GM12878 (cell line): ENCODE measurements at regions of chr13 and their contacts with region 1.

Region 1: GRCh38 chr13:50911937-50912795 is 2.6 kb downstream of the RNASEH2B start:
- DNase-seq: peak; percentile 88
- ATAC-seq: peak; percentile 63
- H3K4me3 ChIP-seq: peak overlapping the region; percentile 95
- H3K27ac ChIP-seq: peak overlapping the region; percentile 99
- H3K4me1 ChIP-seq: peaks cover 25% of the 10 kb centered on the region
- H3K27me3 ChIP-seq: no peaks in the 10 kb centered on the region
- CTCF ChIP-seq: peak; percentile 89 to 98 (median 91); a peak in 5 of 6 replicates
- EP300 ChIP-seq: peak; percentile 38 to 94; a peak in 3 of 4 replicates
- POLR2A ChIP-seq: peak; percentile 37; the same call in 1 of the 2 replicates
- RAD21 ChIP-seq: peak; percentile 98

Region 2: GRCh38 chr13:49936085-49936940 is 975.9 kb before region 1 on chr13 and contains the start of gene SPRYD7:
- CTCF ChIA-PET with region 1: interaction called, 9 read pairs
- POLR2A ChIA-PET with region 1: interaction called, 4 read pairs
- RAD21 ChIA-PET with region 1: interaction called, 8 read pairs
- SMC1A ChIA-PET with region 1: no interaction called
- in situ Hi-C with region 1: no loop called
- intact Hi-C with region 1: loop called (anchors 5 kb)
- DNase-seq: peak; percentile 90
- ATAC-seq: peak; percentile 97
- H3K4me3 ChIP-seq: peak within 1 kb of the TSS; percentile 82
- H3K27ac ChIP-seq: peak within 1 kb of the TSS; percentile 58
- H3K4me1 ChIP-seq: 0 out of 2 replicates have a peak, but pooled peaks cover 2% of the 10 kb centered on the region
- H3K27me3 ChIP-seq: no peaks in the 10 kb centered on the region
- CTCF ChIP-seq: peak; percentile 96 to 97 (median 96)
- EP300 ChIP-seq: 0 out of 4 replicates have a peak, but pooled peaks of 1 of the 2 experiments have one; percentile 2
- POLR2A ChIP-seq: peak; percentile 91
- RAD21 ChIP-seq: peak; percentile 56
- polyA plus RNA-seq, gene SPRYD7: 12.9 to 13.0 TPM

Region 3: DNA sequence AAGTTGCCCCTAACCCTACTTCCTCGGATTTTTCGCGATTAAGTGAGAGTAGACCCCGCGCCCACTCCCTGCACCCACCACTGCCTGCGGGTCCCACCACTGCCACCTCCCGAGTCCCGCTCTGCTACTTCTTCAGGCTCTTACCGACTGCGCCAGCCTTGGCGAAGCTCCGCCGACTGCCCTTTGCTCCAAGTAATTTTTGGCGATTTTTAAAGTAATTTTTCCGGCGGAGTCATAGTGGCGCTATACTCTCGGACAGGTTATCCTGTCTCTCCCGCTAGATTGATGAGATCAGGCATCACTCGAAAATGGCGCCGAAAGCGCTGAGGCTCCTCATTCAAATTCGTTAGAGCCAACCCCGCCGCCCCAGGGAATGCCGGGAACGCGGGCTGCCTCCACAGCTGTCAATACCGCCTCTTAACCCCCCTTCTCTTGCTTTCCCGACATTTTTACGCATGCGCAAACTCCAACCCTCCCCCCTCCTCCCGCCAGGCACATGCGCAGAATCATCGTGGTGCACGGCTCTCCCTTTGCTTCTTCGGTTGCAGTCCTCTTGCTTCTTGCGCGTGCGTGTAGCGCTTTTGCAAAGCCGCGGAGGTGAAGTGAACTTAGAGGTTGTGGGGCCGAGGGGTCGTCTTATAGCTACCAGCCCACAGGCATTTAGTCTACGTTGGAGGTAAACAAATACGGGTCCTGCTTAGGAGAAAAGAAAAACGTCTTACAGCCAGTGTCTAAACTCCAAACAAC is 830.3 kb before region 1 on chr13:
- CTCF ChIA-PET with region 1: interaction called, 33 read pairs
- POLR2A ChIA-PET with region 1: interaction called, 4 read pairs
- RAD21 ChIA-PET with region 1: interaction called, 118 read pairs
- SMC1A ChIA-PET with region 1: interaction called, 57 read pairs
- in situ Hi-C with region 1: loop called (anchors 5 kb)
- intact Hi-C with region 1: loop called (anchors 2 kb)
- DNase-seq: peak; percentile 100
- ATAC-seq: peak; percentile 79
- H3K4me3 ChIP-seq: peak overlapping the region; percentile 92
- H3K27ac ChIP-seq: peak overlapping the region; percentile 82
- H3K4me1 ChIP-seq: peaks cover 4% of the 10 kb centered on the region; the same call in 1 of the 2 replicates
- H3K27me3 ChIP-seq: no peaks in the 10 kb centered on the region
- CTCF ChIP-seq: 0 out of 6 replicates have a peak, but pooled peaks of 2 of the 3 experiments have one; percentile 0 to 9
- EP300 ChIP-seq: 0 out of 4 replicates have a peak, but pooled peaks of 1 of the 2 experiments have one; percentile 9
- POLR2A ChIP-seq: peak; percentile 69
- RAD21 ChIP-seq: no peak

Region 4: GRCh38 chr13:50529154-50529882 is 382.8 kb before region 1 on chr13:
- CTCF ChIA-PET with region 1: no interaction called
- POLR2A ChIA-PET with region 1: no interaction called
- RAD21 ChIA-PET with region 1: interaction called, 4 read pairs
- SMC1A ChIA-PET with region 1: interaction called, 11 read pairs
- in situ Hi-C with region 1: no loop called
- intact Hi-C with region 1: loop called (anchors 5 kb)
- DNase-seq: no peak
- ATAC-seq: no peak
- H3K4me3 ChIP-seq: no peak overlapping the region
- H3K27ac ChIP-seq: no peak overlapping the region
- H3K4me1 ChIP-seq: no peaks in the 10 kb centered on the region
- H3K27me3 ChIP-seq: peaks cover 2 to 5% of the 10 kb centered on the region in 2 experiments; a peak in 3 of 4 replicates
- CTCF ChIP-seq: no peak
- EP300 ChIP-seq: no peak
- POLR2A ChIP-seq: no peak
- RAD21 ChIP-seq: no peak

Region 5: GRCh38 chr13:50801087-50801931 is 110.9 kb before region 1 on chr13:
- CTCF ChIA-PET with region 1: interaction called, 52 read pairs
- POLR2A ChIA-PET with region 1: interaction called, 6 read pairs
- RAD21 ChIA-PET with region 1: interaction called, 52 read pairs
- SMC1A ChIA-PET with region 1: interaction called, 38 read pairs
- in situ Hi-C with region 1: loop called (anchors 5 kb)
- intact Hi-C with region 1: loop called (anchors 1 kb)
- DNase-seq: peak; percentile 69
- ATAC-seq: peak; percentile 99
- H3K4me3 ChIP-seq: no peak overlapping the region; the same call in 1 of the 2 replicates
- H3K27ac ChIP-seq: no peak overlapping the region
- H3K4me1 ChIP-seq: peaks cover 11% of the 10 kb centered on the region
- H3K27me3 ChIP-seq: no peaks in the 10 kb centered on the region
- CTCF ChIP-seq: peak; percentile 76 to 86 (median 85)
- EP300 ChIP-seq: no peak
- POLR2A ChIP-seq: no peak
- RAD21 ChIP-seq: peak; percentile 95

Region 6: GRCh38 chr13:50898338-50898737 is 13.8 kb before region 1 on chr13:
- CTCF ChIA-PET with region 1: interaction called, 85 read pairs
- POLR2A ChIA-PET with region 1: interaction called, 39 read pairs
- RAD21 ChIA-PET with region 1: interaction called, 77 read pairs
- SMC1A ChIA-PET with region 1: interaction called, 141 read pairs
- in situ Hi-C with region 1: no loop called
- intact Hi-C with region 1: loop called (anchors 1 kb)
- DNase-seq: no peak
- ATAC-seq: peak; percentile 19; the same call in 1 of the 3 replicates
- H3K4me3 ChIP-seq: no peak overlapping the region
- H3K27ac ChIP-seq: no peak overlapping the region
- H3K4me1 ChIP-seq: peaks cover 7% of the 10 kb centered on the region
- H3K27me3 ChIP-seq: no peaks in the 10 kb centered on the region
- CTCF ChIP-seq: no peak
- EP300 ChIP-seq: no peak
- POLR2A ChIP-seq: no peak
- RAD21 ChIP-seq: no peak